A549 (cell line): ENCODE measurements at regions of chr6 and their contacts with region 1.

Region 1: GRCh38 chr6:24283043-24283985 is 74.5 kb downstream of the DCDC2 start:
- DNase-seq: peak; percentile 83 to 90
- ATAC-seq: peak; percentile 100
- H3K4me3 ChIP-seq: no peak overlapping the region
- H3K27ac ChIP-seq: peak overlapping the region; percentile 71 to 80
- H3K4me1 ChIP-seq: peaks cover 13% of the 10 kb centered on the region
- CTCF ChIP-seq: peak; percentile 98
- EP300 ChIP-seq: no peak
- POLR2A ChIP-seq: no peak
- RAD21 ChIP-seq: peak; percentile 66 to 91

Region 2: GRCh38 chr6:24296944-24297343 is 13.6 kb after region 1 on chr6:
- CTCF ChIA-PET with region 1: interaction called, 17 read pairs
- POLR2A ChIA-PET with region 1: no interaction called
- DNase-seq: no peak
- ATAC-seq: no peak
- H3K4me3 ChIP-seq: no peak overlapping the region
- H3K27ac ChIP-seq: no peak overlapping the region
- H3K4me1 ChIP-seq: no peaks in the 10 kb centered on the region; the same call in 2 of the 3 replicates
- CTCF ChIP-seq: no peak
- EP300 ChIP-seq: no peak
- POLR2A ChIP-seq: no peak
- RAD21 ChIP-seq: no peak

Region 3: GRCh38 chr6:24313251-24314141 is 30.2 kb after region 1 on chr6:
- CTCF ChIA-PET with region 1: interaction called, 16 read pairs
- POLR2A ChIA-PET with region 1: no interaction called
- DNase-seq: peak; percentile 15 to 84
- ATAC-seq: peak; percentile 93 to 97
- H3K4me3 ChIP-seq: 0 out of 3 replicates have a peak overlapping the region, but pooled peaks have one; percentile 8
- H3K27ac ChIP-seq: peak overlapping the region; percentile 72 to 89
- H3K4me1 ChIP-seq: peaks cover 60% of the 10 kb centered on the region
- CTCF ChIP-seq: no peak
- EP300 ChIP-seq: peak; percentile 71 to 93; a peak in 4 of 5 replicates
- POLR2A ChIP-seq: no peak
- RAD21 ChIP-seq: peak; percentile 8 to 38; a peak in 2 of 5 replicates

Region 4: DNA sequence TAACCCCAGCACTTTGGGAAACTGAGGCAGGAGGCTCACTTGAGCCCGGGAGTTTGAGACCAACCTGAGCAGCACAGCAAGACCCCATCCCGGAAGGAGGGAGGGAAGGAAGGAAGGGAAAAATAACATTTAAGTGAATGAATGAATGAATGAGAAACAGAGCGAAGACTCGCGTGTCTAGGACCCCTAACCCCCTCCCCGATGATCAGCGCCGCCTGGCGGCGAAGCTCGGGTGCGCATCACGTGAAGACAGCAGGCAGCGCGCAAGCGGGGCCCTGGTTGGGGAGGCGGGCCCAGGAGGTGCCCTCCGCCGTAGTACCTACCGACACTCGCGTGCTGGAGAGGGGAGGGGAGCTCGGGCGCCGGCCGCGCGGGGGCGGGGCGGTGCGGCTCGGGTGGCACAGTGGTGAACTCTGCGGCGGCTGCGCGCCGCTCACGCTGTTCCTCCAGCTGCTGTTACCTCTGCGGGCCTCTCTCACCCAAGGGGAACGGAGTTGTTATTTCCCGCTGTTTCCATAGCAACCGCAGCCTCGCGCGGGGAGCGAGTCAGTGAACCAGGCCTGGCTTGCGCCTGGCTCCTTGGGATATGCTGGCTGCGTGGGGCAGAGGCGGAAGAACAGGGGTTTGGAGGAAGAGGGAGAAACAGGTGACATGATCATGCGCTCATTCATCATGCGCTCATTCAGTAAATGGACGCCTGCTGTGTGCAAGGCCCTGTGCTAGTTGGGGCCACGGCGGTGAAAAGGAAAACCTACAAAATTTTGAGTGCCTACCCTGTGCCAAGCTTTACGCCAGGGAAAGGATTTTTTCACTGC is 76.5 kb after region 1 on chr6:
- CTCF ChIA-PET with region 1: interaction called, 25 read pairs
- POLR2A ChIA-PET with region 1: interaction called, 3 read pairs
- DNase-seq: peak; percentile 60 to 92
- ATAC-seq: peak; percentile 88 to 92
- H3K4me3 ChIP-seq: peak overlapping the region; percentile 34
- H3K27ac ChIP-seq: peak overlapping the region; percentile 79 to 87
- H3K4me1 ChIP-seq: peaks cover 14% of the 10 kb centered on the region; the same call in 2 of the 3 replicates
- CTCF ChIP-seq: peak; percentile 80
- EP300 ChIP-seq: no peak
- POLR2A ChIP-seq: no peak
- RAD21 ChIP-seq: peak; percentile 59 to 75; a peak in 4 of 5 replicates

Region 5: DNA sequence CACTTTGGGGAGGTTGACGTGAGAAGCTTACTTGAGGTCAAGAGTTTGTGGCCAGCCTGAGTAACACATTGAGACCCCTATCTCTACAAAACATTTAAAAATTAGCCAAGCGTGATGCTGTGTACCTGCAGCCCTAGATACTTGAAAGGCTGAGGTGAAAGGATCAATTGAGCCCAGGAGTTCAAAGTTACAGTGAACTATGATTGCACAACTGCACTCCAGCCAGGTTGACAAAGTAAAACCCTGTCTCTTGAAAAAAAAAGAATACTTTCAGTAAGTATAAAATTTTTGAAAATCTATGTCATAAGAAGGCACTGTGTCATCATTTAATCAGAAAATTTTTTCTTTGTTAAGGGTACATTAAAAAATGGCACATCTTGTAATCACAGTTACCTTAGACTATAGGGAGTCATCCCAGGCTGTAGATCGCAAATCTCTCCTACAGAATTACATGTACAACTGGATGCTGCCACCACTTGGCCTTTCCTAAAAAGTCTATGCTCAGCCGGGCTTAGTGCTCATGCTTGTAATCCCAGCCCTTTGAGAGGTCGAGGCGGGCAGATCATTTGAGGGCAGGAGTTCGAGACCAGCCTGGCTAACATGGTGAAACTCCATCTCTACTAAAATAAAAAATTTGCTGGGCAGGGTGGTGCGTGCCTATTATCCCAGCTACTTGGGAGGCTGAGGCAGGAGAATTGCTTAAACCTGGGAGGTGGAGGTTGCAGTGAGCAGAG is 102.4 kb after region 1 on chr6:
- CTCF ChIA-PET with region 1: interaction called, 79 read pairs
- POLR2A ChIA-PET with region 1: interaction called, 8 read pairs
- DNase-seq: peak in 1 of 2 experiments; percentile 53
- ATAC-seq: peak in 1 of 2 experiments; percentile 49; a peak in 1 of 6 replicates
- H3K4me3 ChIP-seq: no peak overlapping the region
- H3K27ac ChIP-seq: peak overlapping the region; percentile 13 to 69; a peak in 5 of 6 replicates
- H3K4me1 ChIP-seq: peaks cover 34% of the 10 kb centered on the region; the same call in 2 of the 3 replicates
- CTCF ChIP-seq: peak; percentile 23; the same call in 1 of the 3 replicates
- EP300 ChIP-seq: no peak
- POLR2A ChIP-seq: no peak
- RAD21 ChIP-seq: peak; percentile 38 to 42; a peak in 4 of 5 replicates